Posterior vena cava (tissue), 2 donors: ENCODE measurements at regions of chr20 and their contacts with region 1.

Region 1: GRCh38 chr20:6057691-6058090 is 3.8 kb upstream of the LRRN4 start:
- DNase-seq: no peak

Region 2: GRCh38 chr20:6074145-6074561 is 16.5 kb after region 1 on chr20:
- intact Hi-C with region 1: loop called in 1 of 2 experiments (anchors 1 kb)
- DNase-seq: no peak

Region 3: GRCh38 chr20:6081236-6081635 is 23.5 kb after region 1 on chr20:
- intact Hi-C with region 1: loop called in 1 of 2 experiments (anchors 2 kb)
- DNase-seq: no peak